Sigmoid colon (tissue), 7 donors: ENCODE measurements at regions of chr4 and their contacts with region 1.

Region 1: DNA sequence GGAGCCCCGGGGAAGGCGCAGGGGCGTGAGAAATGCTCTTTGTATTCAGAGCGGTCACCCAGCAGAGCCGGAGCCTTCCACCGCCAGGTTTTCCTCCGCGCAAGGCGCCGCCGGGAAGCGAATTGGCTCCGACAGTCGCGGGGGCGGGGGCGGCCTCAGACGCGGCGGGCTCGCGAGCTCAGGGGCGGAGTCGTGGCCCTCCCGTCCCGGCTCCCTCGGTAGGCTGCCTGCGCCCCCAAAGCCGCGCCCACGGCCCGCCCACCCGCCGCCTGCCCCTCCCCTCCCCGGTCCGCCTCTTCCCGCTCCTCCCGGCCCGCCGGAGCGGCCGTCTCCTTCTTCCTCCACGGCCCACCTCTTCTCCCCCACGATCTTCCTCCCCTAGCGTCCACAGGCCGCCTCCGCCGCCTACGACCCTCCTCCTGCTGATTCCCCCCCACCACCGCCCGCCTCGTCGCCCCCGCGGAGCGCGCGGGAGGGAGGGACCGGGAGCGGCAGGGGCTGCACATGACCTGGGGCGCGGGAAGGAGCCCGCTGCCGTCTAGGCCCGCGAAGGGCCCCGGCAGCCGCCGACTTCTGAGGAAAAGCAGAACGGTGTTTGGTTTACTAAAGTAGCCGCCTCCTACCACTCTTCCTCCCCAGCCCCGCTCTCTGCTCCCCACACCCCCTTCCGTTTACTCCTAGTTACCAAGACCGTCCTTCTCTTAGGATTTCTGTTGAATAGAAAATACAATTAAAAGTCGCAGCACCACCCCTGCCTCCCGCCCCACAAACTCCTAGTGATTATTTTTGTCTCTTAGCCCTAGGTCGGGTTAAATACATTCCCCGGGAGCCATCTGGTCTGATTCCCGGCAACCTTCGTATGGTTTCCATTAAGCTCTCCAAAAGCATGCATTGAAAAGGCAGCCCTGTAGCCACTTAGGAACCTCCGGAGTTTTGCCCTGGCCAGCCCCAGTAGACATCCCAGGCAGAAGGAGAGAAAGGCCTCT is 53.2 kb downstream of the C4orf51 start:
- DNase-seq: peak; percentile 98
- H3K4me3 ChIP-seq: peak overlapping the region; percentile 59 to 63 (median 62)
- H3K27ac ChIP-seq: peak overlapping the region; percentile 96 to 99 (median 97)
- H3K4me1 ChIP-seq: peaks cover 0 to 53% (median 47%) of the 10 kb centered on the region in 4 donors
- H3K27me3 ChIP-seq: no peaks in the 10 kb centered on the region
- CTCF ChIP-seq: no peak
- EP300 ChIP-seq: peak in 2 of 4 donors; percentile 31 to 55
- POLR2A ChIP-seq: peak; percentile 75 to 83

Region 2: GRCh38 chr4:145481164-145481941 is 251.8 kb before region 1 on chr4 and contains the start of gene SMAD1:
- intact Hi-C with region 1: loop called (anchors 10 kb)
- DNase-seq: peak; percentile 90
- H3K4me3 ChIP-seq: peak within 1 kb of the TSS; percentile 82 to 97 (median 91)
- H3K27ac ChIP-seq: peak within 1 kb of the TSS; percentile 97 to 99 (median 98)
- H3K4me1 ChIP-seq: peaks cover 0 to 33% (median 20%) of the 10 kb centered on the region in 4 donors
- H3K27me3 ChIP-seq: no peaks in the 10 kb centered on the region
- CTCF ChIP-seq: no peak
- EP300 ChIP-seq: no peak
- POLR2A ChIP-seq: no peak
- total RNA-seq, gene SMAD1: 25.8 to 45.7 (median 33.4) TPM

Region 3: DNA sequence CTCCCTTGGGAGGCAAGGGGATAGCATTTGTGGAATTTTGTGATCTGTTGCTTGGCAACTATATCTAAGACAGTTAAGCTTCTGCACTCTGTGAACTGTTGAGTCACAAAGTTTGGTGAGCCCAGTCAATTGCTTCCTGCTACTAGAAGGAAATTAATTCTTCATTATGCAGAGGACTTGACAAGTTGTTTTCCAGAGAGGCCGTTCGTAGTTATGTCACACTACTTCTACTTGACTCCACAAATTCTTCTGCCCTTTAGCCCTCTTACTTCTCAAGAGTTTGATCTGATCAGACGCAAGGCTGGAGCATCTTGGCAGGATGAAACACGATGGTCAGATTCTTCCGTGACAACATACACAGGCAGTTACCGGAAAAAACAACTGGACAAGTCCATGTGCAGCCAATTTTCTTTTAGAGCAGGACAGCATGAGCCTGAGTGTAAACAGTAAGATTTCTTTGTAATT is 53.2 kb before region 1 on chr4 and contains the start of gene C4orf51:
- intact Hi-C with region 1: loop called (anchors 5 kb)
- DNase-seq: no peak
- H3K4me3 ChIP-seq: no peak within 1 kb of the TSS
- H3K27ac ChIP-seq: peak within 1 kb of the TSS in 3 of 4 donors; percentile 41 to 67 (median 44)
- H3K4me1 ChIP-seq: peaks cover 0 to 27% (median 19%) of the 10 kb centered on the region in 4 donors
- H3K27me3 ChIP-seq: no peaks in the 10 kb centered on the region
- CTCF ChIP-seq: no peak
- EP300 ChIP-seq: no peak
- POLR2A ChIP-seq: no peak
- total RNA-seq, gene C4orf51: not detected

Region 4: DNA sequence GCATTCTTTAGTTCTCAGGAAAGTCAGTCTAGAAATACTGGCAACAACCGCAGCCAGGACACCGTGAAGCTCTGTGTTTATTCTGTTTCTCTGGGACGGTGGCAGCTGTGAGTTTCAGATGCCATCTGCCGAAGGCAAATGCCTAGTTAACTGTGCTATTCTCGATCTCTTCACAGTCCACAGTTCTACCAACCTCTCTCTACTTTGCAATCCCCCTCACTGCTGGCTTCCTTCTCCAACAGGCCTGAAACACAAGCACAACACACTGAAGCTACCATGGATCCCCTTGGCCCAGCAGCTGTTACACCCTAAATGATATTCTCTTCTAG is 86.6 kb after region 1 on chr4:
- intact Hi-C with region 1: loop called (anchors 5 kb)
- DNase-seq: no peak
- H3K4me3 ChIP-seq: peak overlapping the region in 1 of 4 donors; percentile 4
- H3K27ac ChIP-seq: peak overlapping the region; percentile 39 to 74 (median 68)
- H3K4me1 ChIP-seq: peaks cover 0 to 37% (median 24%) of the 10 kb centered on the region in 4 donors
- H3K27me3 ChIP-seq: no peaks in the 10 kb centered on the region
- CTCF ChIP-seq: no peak
- EP300 ChIP-seq: no peak
- POLR2A ChIP-seq: no peak

Region 5: DNA sequence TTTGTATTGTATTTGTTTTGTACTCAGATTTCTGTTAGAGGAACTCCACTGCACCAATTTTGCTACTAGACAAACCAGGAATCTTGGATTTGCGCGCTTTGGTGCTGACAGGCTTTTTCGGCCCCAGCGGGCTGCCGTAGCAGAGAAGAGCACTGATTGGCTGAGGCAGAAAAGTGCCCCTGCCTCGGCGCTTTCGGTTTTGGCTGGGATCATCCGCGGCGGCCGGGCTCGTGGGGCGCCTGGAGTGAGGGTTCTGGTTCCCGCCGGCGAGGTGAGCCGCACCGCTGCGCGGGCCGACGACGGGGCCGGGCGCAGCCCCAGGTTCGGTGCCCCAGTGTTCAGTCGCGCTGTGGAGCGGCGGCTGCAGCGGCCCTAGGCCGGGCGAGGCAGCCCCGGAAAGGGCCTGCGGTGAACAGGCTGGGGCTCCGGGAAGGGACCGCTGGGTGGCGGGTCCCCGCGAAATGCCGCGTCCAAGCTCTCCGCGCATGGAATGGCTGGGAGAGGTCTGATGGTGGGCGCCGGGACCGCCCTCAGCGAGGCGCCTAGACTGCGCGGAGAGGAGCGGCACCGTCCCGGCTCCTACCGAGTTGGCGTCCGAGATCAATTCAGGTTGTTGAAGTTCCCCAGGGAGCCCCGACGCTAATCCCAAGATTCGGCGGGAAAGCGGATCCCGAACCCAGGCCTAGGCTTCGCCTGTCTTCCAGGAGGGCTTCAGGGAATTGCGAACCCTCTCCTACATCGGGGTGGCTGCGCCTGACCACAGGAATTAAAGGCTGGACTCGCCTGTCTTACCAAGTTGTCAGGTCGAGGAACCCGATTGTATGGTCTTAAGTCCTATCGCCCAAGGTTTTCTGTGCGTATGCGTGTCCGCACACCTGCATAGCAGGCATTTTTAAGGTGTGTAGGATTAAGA is 442.6 kb after region 1 on chr4 and contains the start of gene LSM6:
- intact Hi-C with region 1: loop called (anchors 5 kb)
- DNase-seq: peak; percentile 91
- H3K4me3 ChIP-seq: peak within 1 kb of the TSS; percentile 87 to 92 (median 88)
- H3K27ac ChIP-seq: peak within 1 kb of the TSS; percentile 93 to 95 (median 93)
- H3K4me1 ChIP-seq: peaks cover 0 to 42% (median 33%) of the 10 kb centered on the region in 4 donors
- H3K27me3 ChIP-seq: no peaks in the 10 kb centered on the region
- CTCF ChIP-seq: no peak
- EP300 ChIP-seq: peak in 2 of 4 donors; percentile 13 to 33
- POLR2A ChIP-seq: peak in 1 of 2 donors; percentile 15
- total RNA-seq, gene LSM6: 16.9 to 51.5 (median 32.4) TPM